MCF 10A (cell line): ENCODE measurements at regions of chr18 and their contacts with region 1.

Region 1: DNA sequence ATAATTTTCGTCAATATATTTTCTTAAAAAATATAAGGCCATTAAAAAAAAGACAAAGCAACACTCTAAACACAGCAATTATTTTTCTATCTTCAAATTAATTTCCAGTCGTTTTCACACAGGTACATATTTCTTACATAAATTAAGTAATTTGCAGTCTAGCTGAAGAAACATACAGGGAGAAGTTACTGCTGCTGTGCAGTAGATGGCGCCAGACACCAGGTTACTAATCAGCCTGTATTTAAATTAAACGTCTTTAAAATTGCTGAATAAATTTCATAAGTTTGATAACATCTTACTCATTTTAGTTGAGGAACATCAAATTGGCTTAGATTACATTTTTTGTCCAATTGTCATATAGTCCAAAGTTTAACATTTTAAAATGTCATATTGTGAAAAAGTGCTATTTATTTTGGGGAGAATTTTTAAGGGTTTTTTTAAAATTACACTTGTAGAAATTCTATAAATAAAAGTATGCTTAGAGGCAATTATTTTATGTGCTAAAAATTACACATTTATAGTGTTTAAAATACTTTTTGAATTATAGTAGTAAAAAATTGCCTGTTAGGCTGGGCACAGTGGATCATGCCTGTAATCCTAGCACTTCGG is 88.4 kb downstream of the PMAIP1 start:
- DNase-seq: peak; percentile 56
- H3K4me3 Mint-ChIP-seq: no peak overlapping the region
- H3K27ac Mint-ChIP-seq: no peak overlapping the region
- H3K4me1 Mint-ChIP-seq: no peaks in the 10 kb centered on the region
- H3K27me3 Mint-ChIP-seq: peaks cover 41% of the 10 kb centered on the region
- CTCF ChIP-seq: peak; percentile 88

Region 2: DNA sequence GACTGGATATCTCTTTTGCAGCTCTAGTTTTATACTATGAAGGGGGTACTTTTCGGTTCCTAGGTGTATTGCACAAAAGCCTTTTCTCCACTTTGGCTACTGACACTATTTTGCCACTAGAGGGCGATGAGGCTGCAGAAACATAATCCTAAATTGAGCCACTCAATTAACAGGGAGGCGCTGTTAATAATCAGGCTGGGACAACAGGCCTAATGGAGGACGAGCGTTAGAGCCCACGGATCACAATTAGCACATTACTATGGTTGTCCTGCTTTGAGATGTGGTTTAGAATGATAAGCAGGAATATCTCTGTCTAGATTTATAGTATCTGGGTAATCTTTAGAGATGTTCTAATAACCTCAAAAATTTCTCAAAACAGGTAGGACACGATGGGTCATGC is 150.6 kb before region 1 on chr18:
- CTCF ChIA-PET with region 1: interaction called, 17 read pairs
- POLR2A ChIA-PET with region 1: no interaction called
- intact Hi-C with region 1: loop called (anchors 1 kb)
- DNase-seq: peak; percentile 82
- H3K4me3 Mint-ChIP-seq: no peak overlapping the region
- H3K27ac Mint-ChIP-seq: no peak overlapping the region
- H3K4me1 Mint-ChIP-seq: peaks cover 1% of the 10 kb centered on the region
- H3K27me3 Mint-ChIP-seq: no peaks in the 10 kb centered on the region
- CTCF ChIP-seq: peak; percentile 83

Region 3: DNA sequence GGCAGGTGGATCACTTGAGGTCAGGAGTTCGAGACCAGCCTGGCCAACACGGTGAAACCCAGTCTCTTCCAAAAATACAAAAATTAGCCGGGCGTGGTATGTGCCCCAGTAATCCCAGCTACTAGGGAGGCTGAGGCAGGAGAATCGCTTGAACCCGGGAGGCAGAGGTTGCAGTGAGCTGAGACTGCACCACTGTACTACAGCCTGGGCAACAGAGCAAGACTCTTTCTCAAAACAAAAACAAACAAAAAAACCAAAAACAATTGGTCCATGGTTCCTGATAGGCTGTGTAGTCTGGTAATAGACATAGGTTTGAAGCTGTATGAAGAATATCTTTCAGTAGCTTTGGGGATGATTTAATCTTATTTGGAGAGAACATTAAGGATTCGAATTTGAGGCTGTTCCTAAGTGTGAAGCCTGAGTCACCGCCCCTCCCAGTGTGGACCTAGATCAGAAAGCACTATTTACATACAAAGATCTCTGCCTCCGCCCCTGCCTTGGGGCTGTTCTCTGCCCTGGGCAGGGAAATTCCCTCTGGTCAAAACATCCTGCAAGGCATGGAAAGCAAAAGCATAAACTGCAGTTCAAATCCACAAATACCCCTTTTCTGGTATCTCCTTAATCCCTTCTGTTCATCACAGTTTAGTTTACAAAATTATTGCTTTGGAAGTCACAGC is 141.2 kb before region 1 on chr18:
- CTCF ChIA-PET with region 1: interaction called, 10 read pairs
- POLR2A ChIA-PET with region 1: interaction called, 3 read pairs
- intact Hi-C with region 1: no loop called
- DNase-seq: peak; percentile 53
- H3K4me3 Mint-ChIP-seq: peak overlapping the region; percentile 6
- H3K27ac Mint-ChIP-seq: peak overlapping the region; percentile 69
- H3K4me1 Mint-ChIP-seq: peaks cover 25% of the 10 kb centered on the region
- H3K27me3 Mint-ChIP-seq: no peaks in the 10 kb centered on the region
- CTCF ChIP-seq: no peak

Region 4: DNA sequence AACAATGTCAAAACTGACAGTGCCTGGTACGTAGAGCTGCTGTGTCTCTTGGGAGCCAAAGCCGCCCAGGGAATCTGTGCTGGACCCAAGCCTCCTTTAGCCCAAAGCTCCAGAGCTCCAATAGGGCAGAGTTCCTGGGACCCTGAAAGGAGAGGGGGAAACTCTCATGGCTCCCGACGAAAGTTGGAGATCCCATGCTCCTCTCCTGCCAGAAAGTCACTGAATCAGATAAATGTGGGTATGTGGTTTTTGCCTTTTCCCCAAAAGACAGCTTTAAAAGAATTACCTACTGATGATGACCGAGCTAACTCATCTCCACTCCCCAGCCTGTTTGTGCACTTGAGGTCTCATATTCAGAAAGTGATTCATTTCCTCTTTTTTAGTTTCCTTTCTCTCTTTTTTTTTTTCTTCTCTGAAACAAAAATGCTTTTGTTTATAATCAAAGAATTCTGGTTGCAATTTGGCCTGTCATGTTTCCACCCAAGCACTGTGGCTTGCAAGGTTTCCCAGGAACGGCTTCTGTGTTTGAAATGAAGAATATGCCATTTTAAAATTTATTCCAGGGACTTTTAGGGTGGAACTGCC is 102.5 kb before region 1 on chr18:
- CTCF ChIA-PET with region 1: no interaction called
- POLR2A ChIA-PET with region 1: no interaction called
- intact Hi-C with region 1: no loop called
- DNase-seq: peak; percentile 49
- H3K4me3 Mint-ChIP-seq: no peak overlapping the region
- H3K27ac Mint-ChIP-seq: peak overlapping the region; percentile 44
- H3K4me1 Mint-ChIP-seq: peaks cover 24% of the 10 kb centered on the region
- H3K27me3 Mint-ChIP-seq: no peaks in the 10 kb centered on the region
- CTCF ChIP-seq: no peak

Region 5: DNA sequence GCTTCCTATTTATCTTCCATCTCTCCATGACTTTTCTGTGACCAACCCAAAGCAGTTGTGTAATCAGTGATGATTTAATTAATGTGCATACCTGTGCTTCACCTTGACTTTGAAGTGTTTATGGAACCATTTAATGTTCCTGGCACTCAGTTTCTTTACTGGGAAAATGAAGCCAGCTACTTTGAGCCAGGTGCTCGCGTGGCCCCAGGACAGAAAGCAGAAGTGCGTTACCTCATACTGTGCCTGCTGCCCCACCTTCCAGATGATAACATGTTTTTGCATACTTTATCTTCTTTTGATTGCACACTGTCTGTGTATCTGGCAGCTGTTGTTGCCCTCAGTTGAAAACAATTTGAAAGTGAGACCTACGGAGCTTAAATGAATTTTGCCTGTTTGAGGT is 27.1 kb before region 1 on chr18:
- CTCF ChIA-PET with region 1: interaction called, 14 read pairs
- POLR2A ChIA-PET with region 1: interaction called, 3 read pairs
- intact Hi-C with region 1: no loop called
- DNase-seq: no peak
- H3K4me3 Mint-ChIP-seq: no peak overlapping the region
- H3K27ac Mint-ChIP-seq: no peak overlapping the region
- H3K4me1 Mint-ChIP-seq: peaks cover 6% of the 10 kb centered on the region
- H3K27me3 Mint-ChIP-seq: peaks cover 8% of the 10 kb centered on the region
- CTCF ChIP-seq: no peak

Region 6: GRCh38 chr18:60413944-60414547 is 425.8 kb after region 1 on chr18:
- CTCF ChIA-PET with region 1: interaction called, 15 read pairs
- POLR2A ChIA-PET with region 1: no interaction called
- intact Hi-C with region 1: loop called (anchors 2 kb)
- DNase-seq: peak; percentile 20
- H3K4me3 Mint-ChIP-seq: no peak overlapping the region
- H3K27ac Mint-ChIP-seq: no peak overlapping the region
- H3K4me1 Mint-ChIP-seq: no peaks in the 10 kb centered on the region
- H3K27me3 Mint-ChIP-seq: peaks cover 74% of the 10 kb centered on the region
- CTCF ChIP-seq: peak; percentile 51

Region 7: DNA sequence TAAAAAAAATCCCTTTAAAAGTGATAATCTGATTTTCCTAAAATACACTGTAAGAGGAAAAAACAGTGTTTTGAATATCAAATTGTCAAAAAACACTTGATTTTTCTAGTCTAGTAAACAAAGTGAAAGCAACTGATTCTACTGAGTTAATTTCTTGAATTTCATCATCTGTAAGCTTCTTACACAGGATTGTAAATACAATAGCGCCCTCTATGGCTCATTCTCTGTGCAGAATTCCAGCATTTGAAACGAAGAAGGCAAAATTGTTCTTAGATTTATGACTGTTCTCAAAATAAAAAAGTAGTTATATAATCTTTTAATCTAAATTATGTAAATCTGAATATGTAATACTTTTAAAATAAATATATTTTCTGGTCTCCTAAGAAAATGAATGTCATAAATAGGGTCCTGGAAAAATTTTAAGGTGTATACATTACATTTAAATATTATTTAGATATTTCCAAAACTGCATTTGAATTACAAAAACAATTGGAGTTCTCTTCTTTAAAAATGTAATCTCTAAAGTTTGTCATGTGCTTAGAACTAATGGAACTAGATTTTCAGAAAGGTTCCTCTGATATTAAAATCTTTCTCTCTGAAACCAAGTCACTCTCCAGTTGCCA is 561.2 kb after region 1 on chr18:
- CTCF ChIA-PET with region 1: interaction called, 42 read pairs
- POLR2A ChIA-PET with region 1: interaction called, 5 read pairs
- intact Hi-C with region 1: loop called (anchors 2 kb)
- DNase-seq: peak; percentile 53
- H3K4me3 Mint-ChIP-seq: no peak overlapping the region
- H3K27ac Mint-ChIP-seq: no peak overlapping the region
- H3K4me1 Mint-ChIP-seq: no peaks in the 10 kb centered on the region
- H3K27me3 Mint-ChIP-seq: peaks cover 58% of the 10 kb centered on the region
- CTCF ChIP-seq: peak; percentile 64